Activated CD4-positive, alpha-beta memory T cell treated with anti-CD3 and anti-CD28 coated beads, Interleukin-2, amount 10 ng/mL, durations not matched to agents 7 days and 5 days (primary cell): ENCODE measurements at regions of chr18 and their contacts with region 1.

Region 1: GRCh38 chr18:76709659-76710645 is 112.4 kb upstream of the ZNF236 start:
- DNase-seq: peak; percentile 68
- H3K4me3 Mint-ChIP-seq: no peak overlapping the region
- H3K27ac Mint-ChIP-seq: no peak overlapping the region
- H3K4me1 Mint-ChIP-seq: peaks cover 4% of the 10 kb centered on the region
- H3K27me3 Mint-ChIP-seq: peaks cover 10% of the 10 kb centered on the region

Region 2: GRCh38 chr18:76398896-76399612 is 310.9 kb before region 1 on chr18:
- CTCF ChIA-PET with region 1: interaction called, 78 read pairs
- POLR2A ChIA-PET with region 1: interaction called, 5 read pairs
- DNase-seq: peak; percentile 74
- H3K4me3 Mint-ChIP-seq: no peak overlapping the region
- H3K27ac Mint-ChIP-seq: no peak overlapping the region
- H3K4me1 Mint-ChIP-seq: no peaks in the 10 kb centered on the region
- H3K27me3 Mint-ChIP-seq: peaks cover 9% of the 10 kb centered on the region

Region 3: DNA sequence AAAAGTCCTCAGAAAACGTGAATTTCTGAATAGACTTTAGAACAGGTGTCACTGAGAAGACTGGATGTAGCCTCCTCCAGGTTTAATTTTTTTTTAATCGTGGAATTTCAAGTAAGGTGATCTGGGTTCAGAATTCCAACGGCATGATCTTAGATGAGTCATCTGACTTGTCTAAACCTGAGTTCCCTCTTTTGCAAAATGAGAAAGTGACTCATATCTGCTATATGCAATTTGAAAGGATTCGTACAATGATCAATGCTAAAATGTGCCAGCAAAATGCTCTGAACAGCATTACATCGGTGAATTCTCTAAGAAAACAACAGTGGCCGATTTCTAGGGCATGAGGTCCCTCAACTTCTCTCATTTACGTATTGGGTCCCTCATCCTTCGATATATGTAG is 145.8 kb before region 1 on chr18:
- CTCF ChIA-PET with region 1: no interaction called
- POLR2A ChIA-PET with region 1: no interaction called
- DNase-seq: no peak
- H3K4me3 Mint-ChIP-seq: no peak overlapping the region
- H3K27ac Mint-ChIP-seq: no peak overlapping the region
- H3K4me1 Mint-ChIP-seq: no peaks in the 10 kb centered on the region
- H3K27me3 Mint-ChIP-seq: no peaks in the 10 kb centered on the region

Region 4: GRCh38 chr18:76658627-76659026 is 51.3 kb before region 1 on chr18:
- CTCF ChIA-PET with region 1: interaction called, 10 read pairs
- POLR2A ChIA-PET with region 1: no interaction called
- DNase-seq: no peak
- H3K4me3 Mint-ChIP-seq: no peak overlapping the region
- H3K27ac Mint-ChIP-seq: no peak overlapping the region
- H3K4me1 Mint-ChIP-seq: peaks cover 17% of the 10 kb centered on the region
- H3K27me3 Mint-ChIP-seq: peaks cover 22% of the 10 kb centered on the region

Region 5: DNA sequence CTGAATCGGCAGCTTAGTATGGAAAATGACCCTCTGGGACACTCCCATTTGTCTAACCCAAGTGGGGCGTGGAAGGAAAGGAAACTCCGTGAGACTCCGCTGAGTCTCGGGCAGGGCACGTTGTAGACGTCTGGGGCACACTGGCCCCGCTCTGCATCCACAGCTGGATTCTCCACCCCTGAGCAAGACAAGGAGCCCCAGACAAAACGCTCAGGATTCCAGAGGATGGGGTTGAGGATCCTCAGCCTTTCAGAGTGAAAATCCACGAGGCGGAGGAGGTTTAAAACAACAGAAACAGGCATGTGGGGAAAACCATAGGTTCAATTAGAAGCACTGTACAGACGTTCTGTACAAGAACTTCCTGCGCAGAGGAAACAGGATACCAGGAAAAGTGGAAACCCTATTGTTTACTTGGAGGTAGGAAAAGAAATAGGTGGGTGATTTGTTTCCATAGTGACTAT is 12.5 kb before region 1 on chr18:
- CTCF ChIA-PET with region 1: interaction called, 17 read pairs
- POLR2A ChIA-PET with region 1: no interaction called
- DNase-seq: no peak
- H3K4me3 Mint-ChIP-seq: no peak overlapping the region
- H3K27ac Mint-ChIP-seq: no peak overlapping the region
- H3K4me1 Mint-ChIP-seq: no peaks in the 10 kb centered on the region
- H3K27me3 Mint-ChIP-seq: peaks cover 38% of the 10 kb centered on the region

Region 6: DNA sequence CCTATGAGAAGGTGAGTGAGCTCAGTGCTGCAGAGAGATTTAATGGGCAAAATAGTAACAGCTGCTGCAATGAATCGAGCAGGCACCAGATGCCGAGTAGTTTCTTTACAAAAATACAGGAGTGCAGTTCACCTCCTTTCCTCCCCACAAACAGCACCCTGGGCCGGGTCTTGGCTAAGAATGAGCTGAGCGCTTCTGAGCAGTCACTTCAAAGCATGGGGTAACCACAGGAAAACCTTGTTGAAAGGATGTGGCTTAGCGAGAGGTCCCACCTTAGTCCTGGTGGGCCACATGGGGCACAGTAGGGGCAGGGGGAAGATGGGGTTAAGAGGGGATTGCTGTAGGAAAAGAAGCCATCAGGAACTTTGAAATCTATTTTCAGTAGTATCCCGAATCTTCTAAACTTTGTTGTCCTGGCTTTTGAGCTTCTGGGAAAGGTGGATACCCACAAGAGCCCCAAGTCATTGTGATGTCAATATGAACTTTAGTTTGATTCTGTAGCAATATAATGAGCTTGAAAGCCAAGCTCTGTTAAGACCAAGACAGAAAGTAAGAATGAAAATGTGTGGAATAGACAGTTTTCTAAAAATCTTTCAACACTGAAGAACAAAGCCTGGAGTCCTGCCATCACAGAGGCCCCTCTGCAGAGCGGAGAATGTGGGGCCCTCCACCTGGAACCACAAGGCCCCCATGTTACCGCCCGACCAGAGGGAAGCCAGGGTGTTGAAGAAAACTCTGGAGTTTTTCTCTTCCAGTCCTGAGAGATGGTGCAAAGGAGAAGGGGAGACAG is 11.4 kb after region 1 on chr18:
- CTCF ChIA-PET with region 1: interaction called, 24 read pairs
- POLR2A ChIA-PET with region 1: interaction called, 10 read pairs
- DNase-seq: peak; percentile 83
- H3K4me3 Mint-ChIP-seq: peak overlapping the region; percentile 66
- H3K27ac Mint-ChIP-seq: peak overlapping the region; percentile 98
- H3K4me1 Mint-ChIP-seq: peaks cover 63% of the 10 kb centered on the region
- H3K27me3 Mint-ChIP-seq: no peaks in the 10 kb centered on the region